Activated CD4-positive, alpha-beta T cell treated with anti-CD3 and anti-CD28 coated beads, Interleukin-2, amount 10 ng/mL, durations not matched to agents 24 days and 14 days (primary cell): ENCODE measurements at regions of chr17 and their contacts with region 1.

Region 1: DNA sequence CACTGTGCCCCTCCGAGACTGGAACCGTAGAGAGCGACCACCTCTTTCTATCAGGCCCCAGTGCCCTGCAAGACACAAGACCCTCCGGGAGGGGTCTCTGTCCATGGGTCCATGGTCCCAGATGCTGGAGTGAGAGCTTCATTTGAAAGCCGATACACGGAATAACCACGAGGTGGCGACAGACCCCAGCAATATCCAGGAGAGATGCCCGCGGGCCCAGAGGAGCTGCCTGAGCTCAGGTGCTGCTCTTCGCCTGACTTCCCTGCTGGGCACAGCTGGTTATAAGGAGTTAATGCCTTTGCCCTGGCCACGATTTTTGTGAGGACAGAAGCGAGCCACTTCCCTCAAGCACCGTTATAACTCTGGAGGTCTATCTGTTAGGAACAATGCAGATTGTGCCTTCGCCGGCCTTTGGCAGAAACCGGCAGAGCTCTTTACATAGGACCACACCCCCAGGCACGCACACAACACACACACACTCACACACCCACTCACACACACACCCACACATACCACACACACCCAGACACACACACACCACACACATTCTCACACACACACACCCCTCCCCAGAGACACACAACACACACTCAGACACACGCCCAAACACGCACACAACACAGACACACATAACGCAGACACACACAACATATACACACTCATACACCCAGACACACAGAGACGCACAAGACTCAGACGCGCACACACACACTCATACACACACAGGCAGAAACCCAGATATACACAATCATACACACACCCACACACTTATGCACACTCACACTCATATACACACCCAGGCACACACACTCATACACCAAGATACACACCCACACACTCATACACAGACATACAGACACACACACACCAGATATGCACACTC is 436.4 kb downstream of the SOX9 start:
- DNase-seq: peak; percentile 90
- H3K4me3 Mint-ChIP-seq: no peak overlapping the region
- H3K27ac Mint-ChIP-seq: no peak overlapping the region
- H3K4me1 Mint-ChIP-seq: no peaks in the 10 kb centered on the region
- H3K27me3 Mint-ChIP-seq: no peaks in the 10 kb centered on the region

Region 2: GRCh38 chr17:72273673-72274056 is 283.5 kb before region 1 on chr17:
- intact Hi-C with region 1: no loop called
- DNase-seq: no peak
- H3K4me3 Mint-ChIP-seq: no peak overlapping the region
- H3K27ac Mint-ChIP-seq: no peak overlapping the region
- H3K4me1 Mint-ChIP-seq: no peaks in the 10 kb centered on the region
- H3K27me3 Mint-ChIP-seq: no peaks in the 10 kb centered on the region

Region 3: GRCh38 chr17:72592242-72592966 is 35.2 kb after region 1 on chr17:
- intact Hi-C with region 1: loop called (anchors 2 kb)
- DNase-seq: peak; percentile 92
- H3K4me3 Mint-ChIP-seq: peak overlapping the region; percentile 90
- H3K27ac Mint-ChIP-seq: peak overlapping the region; percentile 64
- H3K4me1 Mint-ChIP-seq: peaks cover 28% of the 10 kb centered on the region
- H3K27me3 Mint-ChIP-seq: peaks cover 54% of the 10 kb centered on the region

Region 4: DNA sequence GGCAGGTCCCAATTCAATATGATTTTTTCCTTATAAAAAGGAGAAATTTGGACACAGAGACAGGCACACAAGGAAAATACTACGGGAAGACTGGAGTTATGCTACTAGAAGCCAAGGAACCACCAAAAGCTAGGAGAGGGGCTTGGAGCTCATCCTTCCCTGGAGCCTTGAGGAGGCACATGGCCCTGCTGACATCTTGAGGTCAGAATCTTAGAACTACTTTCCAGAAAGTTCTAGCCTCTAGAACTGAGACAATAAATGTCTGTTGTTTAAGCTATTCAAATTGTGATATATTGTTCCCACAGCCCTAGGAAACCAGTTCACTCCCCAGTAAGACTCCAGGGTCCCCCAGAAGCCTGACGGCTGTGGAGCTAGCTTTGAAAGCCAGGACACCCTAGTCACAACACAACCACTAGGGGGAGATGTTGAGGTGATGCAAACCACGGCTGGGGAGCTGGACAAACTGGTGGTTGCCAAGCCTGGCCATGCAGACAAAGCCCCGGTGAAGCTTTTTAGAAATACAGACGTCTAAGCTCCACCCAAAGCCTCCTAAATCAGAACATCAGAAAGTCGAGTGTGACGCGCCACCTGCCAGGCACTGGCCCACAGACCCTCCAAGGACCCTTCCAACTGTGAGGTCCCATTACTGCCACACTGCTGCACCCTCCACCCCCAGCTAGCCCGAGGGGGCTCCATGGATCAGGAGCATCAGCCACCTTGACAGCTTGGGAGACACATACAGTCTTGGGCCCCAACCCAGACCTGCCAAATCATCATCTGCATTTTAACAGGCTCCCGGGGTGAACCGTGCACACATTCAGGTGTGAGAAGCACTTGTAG is 428.9 kb after region 1 on chr17:
- intact Hi-C with region 1: loop called (anchors 2 kb)
- DNase-seq: peak; percentile 86
- H3K4me3 Mint-ChIP-seq: no peak overlapping the region
- H3K27ac Mint-ChIP-seq: no peak overlapping the region
- H3K4me1 Mint-ChIP-seq: peaks cover 2% of the 10 kb centered on the region
- H3K27me3 Mint-ChIP-seq: no peaks in the 10 kb centered on the region

Region 5: GRCh38 chr17:73156166-73156840 is 599.1 kb after region 1 on chr17:
- intact Hi-C with region 1: loop called (anchors 2 kb)
- DNase-seq: peak; percentile 87
- H3K4me3 Mint-ChIP-seq: no peak overlapping the region
- H3K27ac Mint-ChIP-seq: no peak overlapping the region
- H3K4me1 Mint-ChIP-seq: peaks cover 4% of the 10 kb centered on the region
- H3K27me3 Mint-ChIP-seq: peaks cover 15% of the 10 kb centered on the region

Region 6: DNA sequence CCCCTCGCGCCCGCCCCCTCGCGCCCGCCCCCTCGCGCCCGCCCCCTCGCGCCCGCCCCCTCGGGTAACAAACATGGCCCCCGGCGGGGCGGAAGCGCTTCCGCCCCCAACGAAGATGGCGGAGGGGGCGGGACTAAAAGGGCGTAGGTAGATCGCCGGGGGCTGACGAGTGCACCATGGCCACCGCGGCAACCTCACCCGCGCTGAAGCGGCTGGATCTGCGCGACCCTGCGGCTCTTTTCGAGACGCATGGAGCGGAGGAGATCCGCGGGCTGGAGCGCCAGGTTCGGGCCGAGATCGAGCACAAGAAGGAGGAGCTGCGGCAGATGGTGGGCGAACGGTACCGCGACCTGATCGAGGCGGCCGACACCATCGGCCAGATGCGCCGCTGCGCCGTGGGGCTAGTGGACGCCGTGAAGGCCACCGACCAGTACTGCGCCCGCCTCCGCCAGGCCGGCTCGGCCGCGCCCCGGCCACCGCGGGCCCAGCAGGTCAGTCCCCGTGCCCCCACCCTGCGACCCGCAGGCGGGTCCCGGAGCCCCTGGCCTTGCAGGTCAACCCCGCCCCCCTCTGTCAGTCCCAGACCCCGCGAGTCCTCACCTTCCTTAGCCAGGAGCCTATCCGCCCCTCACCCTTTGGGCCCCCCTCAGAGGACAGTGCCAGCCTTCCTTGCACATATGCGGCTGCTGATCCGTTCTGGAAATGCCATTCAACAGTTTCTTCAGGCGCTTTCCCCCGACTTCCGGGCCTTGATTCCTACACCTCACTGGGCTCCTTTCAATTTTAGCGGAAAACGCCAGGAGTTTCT is 635.9 kb after region 1 on chr17 and contains the start of gene COG1:
- intact Hi-C with region 1: loop called (anchors 5 kb)
- DNase-seq: peak; percentile 90
- H3K4me3 Mint-ChIP-seq: peak within 1 kb of the TSS; percentile 93
- H3K27ac Mint-ChIP-seq: peak within 1 kb of the TSS; percentile 97
- H3K4me1 Mint-ChIP-seq: peaks cover 18% of the 10 kb centered on the region
- H3K27me3 Mint-ChIP-seq: no peaks in the 10 kb centered on the region
- total RNA-seq, gene COG1: 30.0 and 32.7 TPM in 2 replicates

Region 7: GRCh38 chr17:73371285-73371684 is 814.1 kb after region 1 on chr17:
- intact Hi-C with region 1: loop called (anchors 1 kb)
- DNase-seq: no peak
- H3K4me3 Mint-ChIP-seq: no peak overlapping the region
- H3K27ac Mint-ChIP-seq: no peak overlapping the region
- H3K4me1 Mint-ChIP-seq: no peaks in the 10 kb centered on the region
- H3K27me3 Mint-ChIP-seq: peaks cover 7% of the 10 kb centered on the region